GM12878 (cell line): ENCODE measurements at regions of chr9 and their contacts with region 1.

Region 1: DNA sequence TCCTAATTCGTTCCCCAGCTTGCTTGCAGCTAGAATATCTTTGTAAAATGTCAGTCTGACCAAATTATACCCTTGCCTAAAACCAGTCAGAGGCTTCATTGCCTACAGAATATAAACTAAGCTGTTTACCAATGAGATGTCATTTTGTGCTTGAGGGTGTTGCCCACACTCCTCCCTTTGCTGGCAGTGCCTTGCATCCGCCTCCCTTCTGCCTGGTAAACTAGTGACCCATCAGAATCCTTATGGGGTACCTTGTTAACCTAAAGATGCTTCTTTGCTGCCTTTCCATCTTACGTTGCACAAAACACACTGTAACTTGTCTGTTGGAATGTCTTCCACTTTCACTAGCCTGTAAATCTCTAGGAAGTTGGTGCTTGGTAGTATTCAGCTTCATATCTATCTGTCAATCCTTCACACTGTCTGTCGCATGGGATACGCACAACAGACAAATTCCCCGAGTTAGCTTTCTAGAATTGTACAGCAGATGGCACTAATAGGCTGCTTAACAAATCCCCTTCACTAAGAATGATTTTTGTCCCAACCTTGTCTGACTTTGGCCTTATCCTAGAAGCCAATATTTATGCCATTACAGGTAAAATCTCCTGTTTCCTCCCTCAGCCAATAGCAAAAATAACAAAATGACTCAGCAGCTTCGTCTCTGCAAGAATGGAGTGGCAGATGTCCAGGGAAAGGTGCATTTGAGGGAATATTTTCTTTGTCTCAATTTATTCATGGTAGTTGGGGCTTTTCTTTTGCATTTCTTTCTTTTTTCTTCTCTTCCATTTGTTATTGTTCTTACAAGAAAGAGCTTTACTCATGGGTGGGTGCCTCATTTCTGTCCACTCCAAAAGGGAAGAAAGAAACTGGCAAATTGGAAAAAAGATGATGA is 3.0 kb downstream of the NUDT2 start:
- DNase-seq: peak; percentile 12
- ATAC-seq: no peak
- H3K4me3 ChIP-seq: no peak overlapping the region
- H3K27ac ChIP-seq: no peak overlapping the region
- H3K4me1 ChIP-seq: no peaks in the 10 kb centered on the region; the same call in 1 of the 2 replicates
- H3K27me3 ChIP-seq: no peaks in the 10 kb centered on the region
- CTCF ChIP-seq: peak; percentile 40 to 61 (median 42); a peak in 4 of 6 replicates
- EP300 ChIP-seq: no peak
- POLR2A ChIP-seq: no peak
- RAD21 ChIP-seq: peak; percentile 55

Region 2: DNA sequence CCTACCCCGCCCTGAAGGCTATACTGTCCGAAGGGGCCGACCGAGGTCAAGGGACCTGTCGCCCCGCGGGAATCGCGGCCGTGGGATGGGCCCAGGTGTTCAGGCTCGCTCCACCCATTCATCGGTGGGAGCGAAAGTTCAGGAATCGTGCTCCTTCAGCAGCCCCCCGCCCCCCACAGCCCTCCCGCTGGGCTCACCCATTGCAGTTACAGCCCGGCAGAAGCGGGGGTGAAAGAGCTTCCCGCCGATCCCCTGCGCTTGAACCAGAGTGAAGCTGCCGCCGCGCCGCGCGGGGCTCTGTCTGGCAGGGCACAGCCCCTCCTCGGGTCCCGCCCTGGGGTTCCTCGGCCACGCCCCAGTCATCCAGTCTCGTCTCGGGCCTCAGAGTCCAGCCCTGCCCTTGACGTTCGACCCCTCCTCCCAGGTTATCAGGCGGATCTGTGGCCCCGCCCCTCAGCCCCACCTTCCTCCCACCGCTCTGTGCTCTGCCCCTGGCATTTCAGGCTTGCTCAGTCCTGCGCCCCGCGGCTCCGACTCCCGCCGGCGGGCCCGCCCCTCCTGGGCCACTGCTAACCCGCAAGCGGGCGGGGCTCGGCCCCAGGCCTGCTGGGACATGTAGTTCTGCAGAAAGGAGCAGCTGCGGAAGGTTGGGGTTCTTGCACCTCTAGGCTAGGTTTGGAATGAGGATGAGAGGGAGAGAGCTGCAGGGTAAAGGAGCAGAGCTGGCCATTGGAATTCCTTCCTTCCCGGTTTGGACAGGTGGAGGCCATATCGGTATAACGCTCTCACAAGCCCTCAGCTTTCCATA is 44.5 kb after region 1 on chr9 and contains the start of gene MYORG:
- CTCF ChIA-PET with region 1: interaction called, 134 read pairs
- POLR2A ChIA-PET with region 1: interaction called, 3 read pairs
- RAD21 ChIA-PET with region 1: interaction called, 12 read pairs
- SMC1A ChIA-PET with region 1: interaction called, 73 read pairs
- in situ Hi-C with region 1: no loop called
- intact Hi-C with region 1: loop called (anchors 1 kb)
- DNase-seq: peak; percentile 82
- ATAC-seq: peak; percentile 88
- H3K4me3 ChIP-seq: peak within 1 kb of the TSS; percentile 68
- H3K27ac ChIP-seq: no peak within 1 kb of the TSS
- H3K4me1 ChIP-seq: peaks cover 21% of the 10 kb centered on the region
- H3K27me3 ChIP-seq: peaks cover 5 to 9% of the 10 kb centered on the region in 2 experiments; a peak in 3 of 4 replicates
- CTCF ChIP-seq: no peak
- EP300 ChIP-seq: no peak
- POLR2A ChIP-seq: peak; percentile 65
- RAD21 ChIP-seq: no peak
- polyA plus RNA-seq, gene MYORG: 0.06 to 0.07 TPM

Region 3: DNA sequence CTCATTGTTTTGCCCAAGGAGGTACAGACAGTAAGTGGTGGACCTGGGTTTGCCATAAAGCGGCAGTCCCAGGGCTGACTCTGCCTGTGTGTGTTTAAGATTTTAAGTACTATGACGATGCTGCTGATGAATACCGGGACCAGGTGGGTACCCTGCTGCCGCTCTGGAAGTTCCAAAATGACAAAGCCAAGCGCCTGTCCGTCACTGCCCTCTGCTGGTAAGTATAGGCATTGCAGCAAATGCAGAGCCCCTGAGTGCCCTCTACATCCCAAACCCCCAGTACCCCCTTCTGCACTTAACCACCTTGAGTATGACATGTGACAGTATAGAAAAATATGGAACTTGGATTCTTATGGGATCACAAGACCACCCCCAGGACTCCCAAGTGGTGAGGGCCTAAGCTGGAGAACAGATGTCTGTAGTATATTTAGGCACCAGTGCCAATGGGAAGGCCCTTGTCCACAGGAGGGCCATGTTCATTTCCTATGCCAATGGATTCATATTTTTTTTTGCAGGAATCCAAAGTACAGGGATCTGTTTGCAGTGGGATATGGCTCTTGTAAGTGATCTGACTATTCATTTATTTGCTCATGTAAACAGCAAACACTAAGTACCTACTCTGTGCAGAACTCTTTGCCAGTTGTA is 168.4 kb after region 1 on chr9:
- CTCF ChIA-PET with region 1: interaction called, 4 read pairs
- POLR2A ChIA-PET with region 1: no interaction called
- RAD21 ChIA-PET with region 1: no interaction called
- SMC1A ChIA-PET with region 1: interaction called, 3 read pairs
- in situ Hi-C with region 1: no loop called
- intact Hi-C with region 1: loop called (anchors 1 kb)
- DNase-seq: no peak
- ATAC-seq: peak; percentile 89
- H3K4me3 ChIP-seq: no peak overlapping the region
- H3K27ac ChIP-seq: no peak overlapping the region
- H3K4me1 ChIP-seq: no peaks in the 10 kb centered on the region
- H3K27me3 ChIP-seq: peaks cover 6 to 8% of the 10 kb centered on the region in 2 experiments
- CTCF ChIP-seq: peak; percentile 82 to 98 (median 94)
- EP300 ChIP-seq: no peak
- POLR2A ChIP-seq: no peak
- RAD21 ChIP-seq: peak; percentile 76